Activated CD4-positive, alpha-beta memory T cell treated with anti-CD3 and anti-CD28 coated beads for 36 hours (primary cell): ENCODE measurements at regions of chr1 and their contacts with region 1.

Region 1: GRCh38 chr1:186212544-186213226 is 162.4 kb downstream of the TPR start:
- DNase-seq: no peak
- H3K4me3 Mint-ChIP-seq: no peak overlapping the region
- H3K27ac Mint-ChIP-seq: no peak overlapping the region
- H3K4me1 Mint-ChIP-seq: no peaks in the 10 kb centered on the region
- H3K27me3 Mint-ChIP-seq: peaks cover 20% of the 10 kb centered on the region

Region 2: DNA sequence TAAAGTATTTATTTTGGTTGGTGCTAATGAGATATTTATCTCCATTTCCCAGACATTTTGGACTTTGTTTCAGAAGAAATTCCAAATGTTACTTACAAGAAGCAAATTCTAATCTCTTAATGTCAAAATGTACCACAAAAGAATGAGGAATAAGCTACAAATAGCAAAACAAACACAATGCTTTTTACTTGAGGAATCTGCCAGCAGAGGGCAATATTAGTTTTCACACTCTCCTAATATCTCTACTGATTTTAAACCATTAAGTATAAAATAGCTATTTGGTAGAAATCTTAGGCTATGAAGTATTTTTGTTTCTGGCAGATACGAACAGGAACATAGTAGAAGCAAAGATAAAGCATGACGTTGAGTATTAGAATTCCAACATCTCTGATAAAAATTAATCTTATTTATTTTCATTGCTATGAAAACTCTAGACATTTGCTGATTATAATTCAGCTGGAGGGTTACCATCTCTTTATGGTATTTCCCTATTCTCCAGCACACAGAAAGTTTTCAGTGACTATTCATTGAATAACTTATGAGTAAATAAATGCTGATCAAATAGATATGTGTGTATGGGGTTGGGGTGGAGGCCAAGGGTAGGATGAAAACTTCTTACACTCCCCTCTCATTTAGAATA is 491.9 kb before region 1 on chr1:
- CTCF ChIA-PET with region 1: interaction called, 3 read pairs
- POLR2A ChIA-PET with region 1: no interaction called
- intact Hi-C with region 1: loop called (anchors 5 kb)
- DNase-seq: no peak
- H3K4me3 Mint-ChIP-seq: no peak overlapping the region
- H3K27ac Mint-ChIP-seq: no peak overlapping the region
- H3K4me1 Mint-ChIP-seq: no peaks in the 10 kb centered on the region
- H3K27me3 Mint-ChIP-seq: no peaks in the 10 kb centered on the region

Region 3: GRCh38 chr1:185813401-185813979 is 399.2 kb before region 1 on chr1:
- CTCF ChIA-PET with region 1: no interaction called
- POLR2A ChIA-PET with region 1: no interaction called
- intact Hi-C with region 1: loop called (anchors 1 kb)
- DNase-seq: no peak
- H3K4me3 Mint-ChIP-seq: no peak overlapping the region
- H3K27ac Mint-ChIP-seq: no peak overlapping the region
- H3K4me1 Mint-ChIP-seq: no peaks in the 10 kb centered on the region
- H3K27me3 Mint-ChIP-seq: peaks cover 3% of the 10 kb centered on the region

Region 4: GRCh38 chr1:186155594-186155993 is 57.1 kb before region 1 on chr1:
- CTCF ChIA-PET with region 1: interaction called, 3 read pairs
- POLR2A ChIA-PET with region 1: no interaction called
- intact Hi-C with region 1: loop called (anchors 2 kb)
- DNase-seq: no peak
- H3K4me3 Mint-ChIP-seq: no peak overlapping the region
- H3K27ac Mint-ChIP-seq: no peak overlapping the region
- H3K4me1 Mint-ChIP-seq: no peaks in the 10 kb centered on the region
- H3K27me3 Mint-ChIP-seq: no peaks in the 10 kb centered on the region